CD8-positive, alpha-beta T cell (primary cell): ENCODE measurements at regions of chr9 and their contacts with region 1.

Region 1: DNA sequence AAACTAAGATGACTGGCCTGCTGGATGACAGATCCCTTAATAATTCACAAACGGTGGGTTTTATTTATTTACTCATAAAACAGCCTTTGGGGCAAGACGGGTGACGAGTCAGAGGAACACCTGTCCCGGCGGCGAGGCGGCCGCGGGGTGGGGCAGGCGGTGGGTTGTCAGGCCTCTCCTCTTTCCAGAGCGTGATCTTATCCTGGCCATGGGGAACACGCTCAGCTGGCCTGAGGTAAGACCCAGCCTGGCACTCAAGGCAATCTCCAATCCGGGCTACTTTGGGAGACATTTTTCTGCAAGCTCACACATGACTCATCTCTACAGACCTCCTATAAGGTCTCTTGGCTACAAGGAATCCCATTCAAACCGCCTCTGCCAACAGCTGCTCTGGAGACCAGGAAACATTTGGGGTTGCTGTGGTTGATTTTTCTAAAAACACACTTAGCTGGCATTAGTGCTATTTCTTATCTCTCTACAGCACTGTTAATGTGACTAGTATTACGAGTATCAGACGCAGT is 6.3 kb downstream of the RAPGEF1 start:
- DNase-seq: peak in 5 of 9 experiments; percentile 32 to 82 (median 59)
- ATAC-seq: peak; percentile 10
- H3K4me3 ChIP-seq: peak overlapping the region; percentile 11 to 17
- H3K4me3 Mint-ChIP-seq: peak overlapping the region; percentile 77
- H3K27ac ChIP-seq: peak overlapping the region; percentile 32 to 73
- H3K27ac Mint-ChIP-seq: peak overlapping the region; percentile 98
- H3K4me1 ChIP-seq: peaks cover 91% of the 10 kb centered on the region
- H3K4me1 Mint-ChIP-seq: peaks cover 87% of the 10 kb centered on the region
- H3K27me3 ChIP-seq: no peaks in the 10 kb centered on the region
- H3K27me3 Mint-ChIP-seq: no peaks in the 10 kb centered on the region
- CTCF ChIP-seq: no peak

Region 2: GRCh38 chr9:131590908-131591844 is 142.4 kb before region 1 on chr9:
- CTCF ChIA-PET with region 1: interaction called, 151 read pairs
- POLR2A ChIA-PET with region 1: interaction called, 5 read pairs
- intact Hi-C with region 1: no loop called
- DNase-seq: peak; percentile 56 to 88 (median 79)
- ATAC-seq: peak; percentile 91
- H3K4me3 ChIP-seq: no peak overlapping the region
- H3K4me3 Mint-ChIP-seq: no peak overlapping the region
- H3K27ac ChIP-seq: peak overlapping the region in 1 of 2 experiments; percentile 19
- H3K27ac Mint-ChIP-seq: peak overlapping the region; percentile 88
- H3K4me1 ChIP-seq: peaks cover 18% of the 10 kb centered on the region
- H3K4me1 Mint-ChIP-seq: peaks cover 23% of the 10 kb centered on the region
- H3K27me3 ChIP-seq: no peaks in the 10 kb centered on the region
- H3K27me3 Mint-ChIP-seq: no peaks in the 10 kb centered on the region
- CTCF ChIP-seq: peak; percentile 83

Region 3: DNA sequence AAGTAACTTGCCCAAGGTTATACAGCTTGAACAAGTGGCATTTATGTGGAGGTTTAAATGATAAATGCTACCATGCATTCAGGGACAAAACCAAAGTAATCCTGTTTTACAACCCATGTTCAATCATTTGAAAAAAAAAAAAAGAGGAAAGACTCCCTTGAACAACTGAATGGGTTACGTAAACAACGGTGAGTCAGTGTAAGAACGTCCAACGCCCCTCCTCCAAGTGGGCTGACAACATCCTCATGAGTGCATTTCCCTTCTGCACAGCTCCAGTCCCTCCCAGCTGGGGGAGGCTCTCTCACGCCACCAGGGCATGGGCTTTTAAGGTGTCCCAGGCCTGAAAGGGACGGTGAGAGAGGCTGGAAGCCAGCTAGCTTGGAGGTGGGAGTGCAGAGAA is 98.3 kb before region 1 on chr9:
- CTCF ChIA-PET with region 1: interaction called, 4 read pairs
- POLR2A ChIA-PET with region 1: interaction called, 5 read pairs
- intact Hi-C with region 1: loop called (anchors 2 kb)
- DNase-seq: peak; percentile 42 to 92 (median 76)
- ATAC-seq: peak; percentile 99
- H3K4me3 ChIP-seq: no peak overlapping the region
- H3K4me3 Mint-ChIP-seq: no peak overlapping the region
- H3K27ac ChIP-seq: peak overlapping the region in 1 of 2 experiments; percentile 74
- H3K27ac Mint-ChIP-seq: peak overlapping the region; percentile 89
- H3K4me1 ChIP-seq: peaks cover 16% of the 10 kb centered on the region
- H3K4me1 Mint-ChIP-seq: peaks cover 30% of the 10 kb centered on the region
- H3K27me3 ChIP-seq: no peaks in the 10 kb centered on the region
- H3K27me3 Mint-ChIP-seq: no peaks in the 10 kb centered on the region
- CTCF ChIP-seq: no peak

Region 4: DNA sequence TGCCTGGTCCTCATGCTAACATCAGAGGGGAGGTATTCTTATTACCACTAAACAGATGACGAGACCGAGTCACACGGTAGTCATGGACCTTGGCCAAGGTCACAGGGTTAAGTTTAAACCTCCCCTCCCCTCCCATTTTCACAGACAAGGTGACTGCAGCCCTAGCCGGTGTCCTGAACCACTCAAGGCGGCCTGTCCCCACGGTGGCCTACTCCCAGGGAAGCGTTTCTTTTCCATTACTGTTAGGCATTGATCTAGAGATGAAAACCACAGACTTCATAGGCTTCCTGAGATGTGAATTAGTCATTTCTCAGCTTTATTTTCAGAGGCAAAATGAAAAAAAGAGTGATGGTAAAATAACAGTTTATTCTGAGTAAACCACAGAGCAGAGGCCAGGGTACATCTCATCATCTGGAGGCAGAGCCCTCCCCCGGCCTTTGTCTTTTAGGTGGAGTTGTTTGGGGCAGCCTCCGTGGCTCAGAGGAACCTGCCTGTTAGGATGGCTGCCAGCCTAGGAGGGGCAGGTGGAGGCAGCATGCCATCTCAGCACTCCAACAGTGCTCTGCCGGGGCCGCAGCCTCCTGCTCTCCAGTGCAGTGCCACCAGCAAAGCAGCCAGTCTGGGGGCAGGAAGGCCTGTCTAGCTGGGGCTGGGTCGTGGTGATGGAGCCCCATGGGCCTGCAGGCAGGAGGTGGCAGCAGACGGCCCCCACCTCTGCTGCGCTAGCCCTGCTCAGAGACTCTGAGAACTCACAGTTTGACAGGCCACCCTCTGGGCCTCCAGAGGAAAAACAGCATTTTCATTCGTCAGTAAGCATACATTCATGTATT is 64.9 kb before region 1 on chr9:
- CTCF ChIA-PET with region 1: interaction called, 7 read pairs
- POLR2A ChIA-PET with region 1: interaction called, 12 read pairs
- intact Hi-C with region 1: loop called (anchors 2 kb)
- DNase-seq: peak; percentile 41 to 88 (median 73)
- ATAC-seq: peak; percentile 74
- H3K4me3 ChIP-seq: peak overlapping the region; percentile 23 to 29
- H3K4me3 Mint-ChIP-seq: peak overlapping the region; percentile 63
- H3K27ac ChIP-seq: peak overlapping the region; percentile 64 to 94
- H3K27ac Mint-ChIP-seq: peak overlapping the region; percentile 99
- H3K4me1 ChIP-seq: peaks cover 73% of the 10 kb centered on the region
- H3K4me1 Mint-ChIP-seq: peaks cover 83% of the 10 kb centered on the region
- H3K27me3 ChIP-seq: no peaks in the 10 kb centered on the region
- H3K27me3 Mint-ChIP-seq: no peaks in the 10 kb centered on the region
- CTCF ChIP-seq: no peak

Region 5: DNA sequence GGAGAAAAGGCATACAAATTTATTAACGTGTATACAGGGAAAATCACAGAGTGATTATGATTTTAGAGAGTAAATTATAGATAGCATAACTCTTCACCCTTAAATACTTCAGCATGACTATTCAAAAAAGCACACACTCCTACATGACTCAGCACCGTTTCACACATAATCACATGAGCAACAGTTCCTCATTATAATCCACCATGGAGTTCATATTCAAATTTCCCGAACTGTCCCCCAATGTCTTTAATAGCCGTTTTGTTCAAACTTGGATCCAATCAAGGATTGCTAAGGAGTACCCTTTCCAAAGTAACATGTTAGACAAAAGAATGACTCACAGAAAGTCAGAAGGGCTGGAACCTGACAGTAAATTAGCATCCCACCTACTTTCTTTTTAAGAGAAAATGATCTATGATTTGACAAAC is 25.9 kb before region 1 on chr9:
- CTCF ChIA-PET with region 1: interaction called, 3 read pairs
- POLR2A ChIA-PET with region 1: interaction called, 3 read pairs
- intact Hi-C with region 1: loop called in 1 of 2 experiments (anchors 2 kb)
- DNase-seq: peak in 2 of 9 experiments; percentile 29 to 54
- ATAC-seq: no peak
- H3K4me3 ChIP-seq: no peak overlapping the region
- H3K4me3 Mint-ChIP-seq: no peak overlapping the region
- H3K27ac ChIP-seq: peak overlapping the region in 1 of 2 experiments; percentile 59
- H3K27ac Mint-ChIP-seq: peak overlapping the region; percentile 69
- H3K4me1 ChIP-seq: peaks cover 37% of the 10 kb centered on the region
- H3K4me1 Mint-ChIP-seq: peaks cover 83% of the 10 kb centered on the region
- H3K27me3 ChIP-seq: no peaks in the 10 kb centered on the region
- H3K27me3 Mint-ChIP-seq: no peaks in the 10 kb centered on the region
- CTCF ChIP-seq: no peak

Region 6: DNA sequence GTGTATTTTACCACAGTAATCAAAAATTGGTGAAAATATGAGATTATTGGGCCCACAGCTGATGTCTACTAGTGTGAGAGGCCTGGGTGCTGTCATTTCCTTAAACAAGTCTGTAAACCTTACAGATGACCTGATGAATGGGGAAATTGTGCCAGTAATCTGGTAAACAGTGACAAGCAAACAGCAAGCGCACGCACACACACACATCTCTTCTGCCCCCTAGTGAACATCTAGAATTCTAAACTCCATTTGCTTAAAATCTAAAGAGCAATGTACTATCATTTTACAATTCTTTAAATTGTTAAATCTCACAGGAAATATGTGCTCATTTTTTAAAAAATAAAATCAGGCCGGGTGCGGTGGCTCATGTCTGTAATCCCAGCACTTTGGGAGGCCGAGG is 13.8 kb after region 1 on chr9:
- CTCF ChIA-PET with region 1: interaction called, 31 read pairs
- POLR2A ChIA-PET with region 1: interaction called, 12 read pairs
- intact Hi-C with region 1: no loop called
- DNase-seq: peak in 4 of 9 experiments; percentile 33 to 73 (median 49)
- ATAC-seq: peak; percentile 50
- H3K4me3 ChIP-seq: no peak overlapping the region
- H3K4me3 Mint-ChIP-seq: no peak overlapping the region
- H3K27ac ChIP-seq: no peak overlapping the region
- H3K27ac Mint-ChIP-seq: peak overlapping the region; percentile 39
- H3K4me1 ChIP-seq: peaks cover 23% of the 10 kb centered on the region
- H3K4me1 Mint-ChIP-seq: peaks cover 36% of the 10 kb centered on the region
- H3K27me3 ChIP-seq: no peaks in the 10 kb centered on the region
- H3K27me3 Mint-ChIP-seq: no peaks in the 10 kb centered on the region
- CTCF ChIP-seq: peak; percentile 39